OCI-LY7 (cell line): ENCODE measurements at regions of chr19 and their contacts with region 1.

Region 1: DNA sequence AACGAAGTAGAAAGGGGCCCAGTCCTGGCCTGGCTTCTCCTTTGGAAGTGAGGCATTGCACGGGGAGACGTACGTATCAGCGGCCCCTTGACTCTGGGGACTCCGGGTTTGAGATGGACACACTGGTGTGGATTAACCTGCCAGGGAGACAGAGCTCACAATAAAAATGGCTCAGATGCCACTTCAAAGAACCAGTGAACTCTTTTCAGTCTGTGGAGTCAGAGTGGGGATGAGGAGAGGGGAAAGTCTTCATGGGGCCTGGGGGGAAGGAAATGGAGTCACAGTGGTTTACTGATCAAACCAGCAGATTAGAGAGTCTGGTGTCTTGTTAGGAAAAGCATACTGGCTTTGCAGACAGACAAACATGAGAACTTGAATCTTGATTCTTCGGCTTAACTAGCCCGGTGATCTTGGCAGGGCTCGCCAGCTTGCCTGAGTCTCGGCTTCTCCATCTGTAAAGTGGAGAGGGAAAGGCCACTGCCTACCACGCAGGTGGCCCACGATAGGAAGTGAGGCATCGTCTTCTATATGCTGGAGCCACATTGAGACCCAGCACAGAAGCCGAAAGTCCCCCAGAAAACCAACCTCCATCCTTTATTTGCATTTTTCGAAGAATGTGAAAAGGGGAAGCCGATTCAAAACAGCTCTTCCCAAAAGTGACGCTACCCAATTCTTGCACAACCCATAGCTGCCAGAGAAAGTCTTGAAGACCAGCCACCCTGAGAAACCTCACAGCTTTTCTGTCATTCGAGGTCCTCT is at the start of gene FFAR1:
- DNase-seq: peak; percentile 89
- H3K4me3 ChIP-seq: peak within 1 kb of the TSS; percentile 32
- H3K27ac ChIP-seq: peak within 1 kb of the TSS; percentile 96
- H3K4me1 ChIP-seq: peaks cover 90% of the 10 kb centered on the region
- CTCF ChIP-seq: no peak
- total RNA-seq, gene FFAR1: 8.5 and 11.4 TPM in 2 replicates

Region 2: DNA sequence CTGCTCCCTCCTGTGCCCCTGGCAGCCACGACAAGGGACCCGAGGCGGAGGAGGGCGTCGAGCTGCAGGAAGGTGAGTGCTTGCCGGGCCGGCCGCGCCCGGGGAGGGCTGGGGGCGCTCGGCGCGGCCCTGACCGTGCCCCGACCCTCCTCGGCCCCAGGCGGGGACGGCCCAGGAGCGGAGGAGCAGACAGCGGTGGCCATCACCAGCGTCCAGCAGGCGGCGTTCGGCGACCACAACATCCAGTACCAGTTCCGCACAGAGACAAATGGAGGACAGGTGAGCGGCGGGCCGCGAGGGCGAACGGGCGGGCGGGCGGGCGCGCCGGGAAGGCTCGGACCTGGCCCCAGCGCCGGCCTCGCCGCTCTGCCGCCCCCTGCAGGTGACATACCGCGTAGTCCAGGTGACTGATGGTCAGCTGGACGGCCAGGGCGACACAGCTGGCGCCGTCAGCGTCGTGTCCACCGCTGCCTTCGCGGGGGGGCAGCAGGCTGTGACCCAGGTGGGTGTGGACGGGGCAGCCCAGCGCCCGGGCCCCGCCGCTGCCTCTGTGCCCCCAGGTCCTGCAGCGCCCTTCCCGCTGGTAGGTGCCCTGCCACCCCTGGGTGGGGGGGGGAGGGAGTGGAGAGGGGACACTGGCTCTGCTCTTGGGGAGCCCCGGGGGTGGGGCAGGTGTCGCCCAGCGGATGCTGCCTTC is 77.8 kb before region 1 on chr19:
- CTCF ChIA-PET with region 1: no interaction called
- POLR2A ChIA-PET with region 1: no interaction called
- intact Hi-C with region 1: loop called (anchors 2 kb)
- DNase-seq: peak; percentile 90
- H3K4me3 ChIP-seq: peak overlapping the region; percentile 75
- H3K27ac ChIP-seq: peak overlapping the region; percentile 61
- H3K4me1 ChIP-seq: peaks cover 43% of the 10 kb centered on the region
- CTCF ChIP-seq: peak; percentile 73

Region 3: DNA sequence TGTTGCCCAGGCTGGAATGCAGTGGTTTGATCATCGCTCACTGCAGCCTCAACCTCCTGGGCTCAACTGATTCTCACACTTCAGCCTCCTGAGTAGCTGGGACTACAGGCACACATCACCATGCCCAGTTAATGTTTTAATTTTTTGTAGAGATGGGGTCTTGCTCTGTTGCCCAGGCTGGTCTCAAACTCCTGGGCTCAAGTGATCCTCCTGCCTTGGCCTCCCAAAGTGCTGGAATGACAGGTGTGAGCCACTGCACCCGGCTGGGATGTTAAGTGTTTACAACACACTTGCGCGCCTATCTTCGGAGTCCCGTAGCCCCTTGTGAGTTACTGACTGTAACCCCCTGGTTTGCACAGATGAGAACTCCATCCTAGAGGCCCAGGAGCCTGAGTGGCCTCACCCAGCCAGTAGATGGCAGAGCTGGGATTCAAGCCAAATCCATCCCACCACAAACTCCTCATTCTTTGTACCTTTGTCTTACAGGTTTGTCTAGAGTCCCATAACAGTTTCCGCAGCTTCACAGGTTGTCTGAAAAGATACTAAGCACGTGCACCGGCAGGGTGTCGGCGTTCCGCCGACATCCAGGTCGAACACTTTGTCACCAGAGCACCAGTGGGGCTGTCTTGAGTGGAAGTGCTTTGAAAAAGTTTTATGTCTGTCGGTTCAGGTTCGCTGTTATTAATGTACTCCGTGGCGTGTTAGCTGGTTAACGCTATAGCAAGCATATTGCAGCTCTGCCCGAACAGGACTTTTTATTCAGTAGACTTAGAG is 40.7 kb before region 1 on chr19:
- CTCF ChIA-PET with region 1: no interaction called
- POLR2A ChIA-PET with region 1: no interaction called
- intact Hi-C with region 1: loop called (anchors 2 kb)
- DNase-seq: peak; percentile 75
- H3K4me3 ChIP-seq: no peak overlapping the region
- H3K27ac ChIP-seq: peak overlapping the region; percentile 26
- H3K4me1 ChIP-seq: peaks cover 72% of the 10 kb centered on the region
- CTCF ChIP-seq: peak; percentile 85

Region 4: DNA sequence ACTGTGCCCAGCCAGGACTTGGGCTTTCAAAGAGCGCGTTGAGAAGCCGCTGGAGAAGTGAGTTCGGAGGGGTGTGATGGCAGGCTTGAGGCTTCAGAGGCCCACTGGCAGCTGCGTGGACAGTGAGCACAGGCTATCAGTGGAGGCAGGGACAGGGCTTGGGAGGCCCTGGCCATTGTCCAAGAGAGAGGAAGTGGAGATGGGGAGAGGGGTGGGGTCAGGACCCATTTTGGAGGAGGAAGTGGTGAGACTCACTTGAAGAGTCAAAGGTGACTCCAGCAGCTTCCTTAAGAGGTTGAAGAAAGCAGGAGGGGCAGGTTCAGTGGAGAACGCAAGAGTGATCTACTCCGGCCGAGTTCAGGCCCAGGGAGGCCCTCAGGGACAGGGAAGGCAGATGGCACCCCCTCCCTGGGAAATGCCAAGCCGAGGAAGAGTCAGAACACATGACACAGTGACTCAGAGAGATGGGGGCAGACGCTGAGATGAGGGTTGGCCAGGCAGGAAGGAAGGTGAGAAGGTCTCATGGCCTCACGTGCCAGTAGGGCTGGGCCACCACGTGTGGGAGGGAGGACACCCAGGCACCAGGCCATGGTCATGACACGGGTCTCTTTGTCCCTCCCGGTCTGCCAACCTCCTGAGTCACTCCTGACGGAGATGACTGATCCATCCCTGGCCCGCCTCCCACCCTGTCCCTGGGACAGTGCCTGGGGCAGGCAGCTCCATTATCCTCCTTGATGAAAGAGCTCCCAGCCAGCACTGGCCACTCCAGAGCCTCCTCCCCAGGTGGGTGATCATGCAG is 28.5 kb before region 1 on chr19:
- CTCF ChIA-PET with region 1: no interaction called
- POLR2A ChIA-PET with region 1: interaction called, 12 read pairs
- intact Hi-C with region 1: no loop called
- DNase-seq: no peak
- H3K4me3 ChIP-seq: peak overlapping the region; percentile 1
- H3K27ac ChIP-seq: peak overlapping the region; percentile 88
- H3K4me1 ChIP-seq: peaks cover 86% of the 10 kb centered on the region
- CTCF ChIP-seq: no peak

Region 5: GRCh38 chr19:35330475-35330874 is 16.9 kb before region 1 on chr19:
- CTCF ChIA-PET with region 1: interaction called, 4 read pairs
- POLR2A ChIA-PET with region 1: interaction called, 33 read pairs
- intact Hi-C with region 1: loop called (anchors 1 kb)
- DNase-seq: peak; percentile 97
- H3K4me3 ChIP-seq: peak overlapping the region; percentile 88
- H3K27ac ChIP-seq: peak overlapping the region; percentile 88
- H3K4me1 ChIP-seq: peaks cover 82% of the 10 kb centered on the region
- CTCF ChIP-seq: no peak